Esophagus squamous epithelium (tissue), 5 donors: ENCODE measurements at regions of chr5 and their contacts with region 1.

Region 1: DNA sequence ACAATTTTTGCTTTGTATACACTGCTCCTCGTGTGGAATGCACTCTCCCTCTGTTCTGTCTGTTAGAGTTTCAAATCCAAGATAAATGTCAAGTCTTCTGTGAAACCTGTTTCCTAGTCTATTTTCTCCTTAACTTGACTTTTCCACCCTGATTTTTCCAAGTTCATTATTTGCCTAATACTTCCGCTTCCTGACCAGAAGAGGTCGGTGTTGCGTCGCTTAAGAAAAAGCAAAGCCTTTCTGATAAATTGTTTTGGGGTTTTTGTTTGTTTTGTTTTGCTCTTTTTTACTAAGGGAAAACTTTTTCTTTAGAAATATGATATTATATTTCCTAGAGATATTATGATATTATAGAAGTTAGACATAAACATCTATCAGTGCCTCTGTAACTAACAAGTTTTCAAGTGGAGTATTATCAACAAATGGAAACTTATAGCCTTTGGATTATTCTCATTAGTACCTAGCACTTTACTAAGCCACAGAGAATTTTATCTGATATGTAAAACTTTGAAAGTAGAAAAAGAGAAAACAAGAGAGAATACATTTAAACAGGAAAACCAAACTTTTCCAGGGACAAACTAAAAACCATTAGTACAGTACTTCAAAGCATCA is 55.8 kb downstream of the PHAX start:
- DNase-seq: no peak
- H3K4me3 ChIP-seq: no peak overlapping the region
- H3K27ac ChIP-seq: no peak overlapping the region
- H3K4me1 ChIP-seq: no peaks in the 10 kb centered on the region
- H3K27me3 ChIP-seq: no peaks in the 10 kb centered on the region
- CTCF ChIP-seq: peak; percentile 47 to 79 (median 64)
- POLR2A ChIP-seq: no peak

Region 2: DNA sequence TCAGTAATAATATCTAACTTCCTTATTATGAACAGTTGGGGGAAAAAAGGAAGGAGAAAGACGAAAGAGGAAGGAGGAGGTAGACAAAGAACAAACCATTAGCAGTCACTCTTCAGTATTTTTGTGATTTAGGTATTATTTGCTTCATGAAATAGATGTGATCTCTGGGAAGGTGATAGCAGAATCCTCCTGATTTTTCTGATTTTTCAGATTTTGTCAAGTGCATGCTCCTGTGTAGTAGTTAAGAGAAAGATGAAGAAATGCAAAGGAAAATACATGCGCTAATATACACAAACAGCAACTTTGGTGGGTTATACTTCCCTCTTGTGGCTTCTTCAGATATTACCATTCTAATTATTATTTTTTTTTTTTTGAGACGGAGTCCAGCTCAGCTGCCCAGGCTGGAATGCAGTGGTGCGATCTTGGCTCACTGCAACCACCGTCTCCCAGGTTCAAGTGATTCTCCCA is 152.1 kb after region 1 on chr5:
- intact Hi-C with region 1: loop called (anchors 10 kb)
- DNase-seq: no peak
- H3K4me3 ChIP-seq: no peak overlapping the region
- H3K27ac ChIP-seq: no peak overlapping the region
- H3K4me1 ChIP-seq: peaks cover 0 to 11% (median 0%) of the 10 kb centered on the region in 3 donors
- H3K27me3 ChIP-seq: no peaks in the 10 kb centered on the region
- CTCF ChIP-seq: peak; percentile 20 to 56 (median 49)
- POLR2A ChIP-seq: no peak

Region 3: GRCh38 chr5:127313847-127314473 is 657.5 kb after region 1 on chr5:
- intact Hi-C with region 1: loop called (anchors 10 kb)
- DNase-seq: no peak
- H3K4me3 ChIP-seq: no peak overlapping the region
- H3K27ac ChIP-seq: no peak overlapping the region
- H3K4me1 ChIP-seq: no peaks in the 10 kb centered on the region
- H3K27me3 ChIP-seq: no peaks in the 10 kb centered on the region
- CTCF ChIP-seq: peak; percentile 45 to 77 (median 67)
- POLR2A ChIP-seq: no peak